ENCODE measurements at regions of chr10 and their contacts with region 1.

Region 1: GRCh38 chr10:97179731-97180362 is 5.9 kb downstream of the SLIT1 start:
- DNase-seq: peak; percentile 60

Region 2: DNA sequence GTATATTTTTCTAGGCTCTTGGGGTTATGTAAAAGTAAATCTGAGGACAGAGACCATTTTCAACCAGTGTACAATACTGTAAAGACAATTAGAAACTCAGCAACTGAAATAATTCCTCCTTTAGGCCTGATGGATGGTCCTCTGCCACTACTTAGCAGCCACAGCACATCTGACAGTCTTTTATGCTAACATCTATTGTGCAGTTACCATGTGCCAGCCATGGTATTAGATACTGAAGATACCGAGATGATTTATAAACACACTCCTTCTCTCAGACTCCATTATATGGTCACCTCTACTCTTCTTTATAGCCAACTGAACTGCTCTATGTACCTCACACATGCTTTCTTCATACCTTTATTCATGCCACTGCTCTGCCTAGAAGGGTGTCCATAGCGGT is 1197.6 kb before region 1 on chr10:
- intact Hi-C with region 1: loop called in 1 of 2 experiments (anchors 5 kb)
- DNase-seq: no peak

Region 3: GRCh38 chr10:96878057-96878456 is 301.8 kb before region 1 on chr10:
- intact Hi-C with region 1: no loop called
- DNase-seq: no peak

Region 4: DNA sequence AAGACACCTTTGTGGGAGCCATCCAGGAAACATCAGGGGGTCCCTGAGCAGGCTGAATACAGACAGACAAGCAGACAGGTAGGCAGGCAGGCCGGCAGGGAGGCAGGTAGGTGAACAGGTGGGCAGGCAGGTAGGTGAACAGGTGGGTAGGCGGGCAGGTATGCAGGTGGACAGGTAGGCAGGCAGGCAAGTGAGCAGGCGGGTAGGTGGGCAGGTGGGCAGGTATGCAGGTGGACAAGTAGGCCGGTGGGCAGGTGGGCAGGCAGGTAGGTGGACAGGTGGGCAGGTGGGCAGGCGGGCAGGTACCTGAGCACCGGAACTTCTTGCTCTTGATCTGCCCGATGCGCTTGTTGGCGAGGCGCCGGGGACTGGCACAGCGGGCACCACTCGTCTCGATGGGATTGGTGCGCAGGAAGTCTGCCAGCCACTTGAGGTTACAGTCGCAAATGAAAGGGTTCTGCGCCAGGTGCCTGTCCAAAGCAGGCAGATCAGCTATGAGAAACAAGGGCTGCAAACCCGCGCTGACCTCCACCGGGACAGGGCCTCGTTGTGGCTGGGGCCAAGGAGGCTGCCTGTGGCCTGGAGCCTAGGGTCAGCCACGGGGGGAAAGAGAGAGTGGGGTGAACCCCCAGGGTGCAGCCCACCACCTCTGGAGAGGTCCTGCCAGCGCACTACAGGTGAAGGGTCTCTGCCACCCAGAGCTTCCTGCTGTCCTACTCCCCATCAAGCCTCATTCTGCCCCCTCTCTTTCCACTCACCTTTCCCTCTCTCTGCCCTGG is 131.0 kb before region 1 on chr10:
- intact Hi-C with region 1: no loop called
- DNase-seq: peak; percentile 47

Measured in posterior vena cava (tissue), 2 donors.